ENCODE measurements at regions of chr14 and their contacts with region 1.

Region 1: GRCh38 chr14:91228112-91229004 is 16.1 kb downstream of the GPR68 start:
- DNase-seq: peak; percentile 87
- H3K4me3 Mint-ChIP-seq: peak overlapping the region; percentile 80
- H3K27ac Mint-ChIP-seq: peak overlapping the region; percentile 100
- H3K4me1 Mint-ChIP-seq: peaks cover 89% of the 10 kb centered on the region
- H3K27me3 Mint-ChIP-seq: no peaks in the 10 kb centered on the region

Region 2: GRCh38 chr14:90970167-90970600 is 258.2 kb before region 1 on chr14:
- intact Hi-C with region 1: loop called (anchors 5 kb)
- DNase-seq: no peak
- H3K4me3 Mint-ChIP-seq: peak overlapping the region; percentile 71
- H3K27ac Mint-ChIP-seq: peak overlapping the region; percentile 90
- H3K4me1 Mint-ChIP-seq: peaks cover 50% of the 10 kb centered on the region
- H3K27me3 Mint-ChIP-seq: no peaks in the 10 kb centered on the region

Region 3: GRCh38 chr14:91078095-91078737 is 150.1 kb before region 1 on chr14:
- intact Hi-C with region 1: loop called (anchors 1 kb)
- DNase-seq: peak; percentile 68
- H3K4me3 Mint-ChIP-seq: peak overlapping the region; percentile 51
- H3K27ac Mint-ChIP-seq: peak overlapping the region; percentile 85
- H3K4me1 Mint-ChIP-seq: peaks cover 63% of the 10 kb centered on the region
- H3K27me3 Mint-ChIP-seq: peaks cover 6% of the 10 kb centered on the region

Region 4: DNA sequence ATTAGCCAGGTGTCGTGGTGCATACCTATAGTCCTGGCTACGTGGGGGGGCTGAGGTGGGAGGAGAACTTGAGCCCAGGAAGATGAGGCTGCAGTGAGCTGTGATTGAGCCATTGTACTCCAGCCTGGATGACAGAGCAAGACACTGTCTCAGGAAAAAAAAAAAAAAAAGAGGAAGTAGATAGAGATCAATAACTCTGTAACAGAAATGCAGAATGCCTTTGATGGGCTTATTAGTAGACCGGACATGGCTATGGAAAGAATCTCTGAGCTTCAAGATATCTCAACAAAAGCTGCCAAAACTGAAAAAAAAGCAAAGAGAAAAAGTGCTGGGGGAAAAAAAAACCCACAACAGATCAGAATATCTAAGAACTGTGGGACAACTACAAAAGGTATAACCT is 21.4 kb before region 1 on chr14:
- intact Hi-C with region 1: loop called (anchors 2 kb)
- DNase-seq: no peak
- H3K4me3 Mint-ChIP-seq: no peak overlapping the region
- H3K27ac Mint-ChIP-seq: no peak overlapping the region
- H3K4me1 Mint-ChIP-seq: peaks cover 41% of the 10 kb centered on the region
- H3K27me3 Mint-ChIP-seq: no peaks in the 10 kb centered on the region

Region 5: DNA sequence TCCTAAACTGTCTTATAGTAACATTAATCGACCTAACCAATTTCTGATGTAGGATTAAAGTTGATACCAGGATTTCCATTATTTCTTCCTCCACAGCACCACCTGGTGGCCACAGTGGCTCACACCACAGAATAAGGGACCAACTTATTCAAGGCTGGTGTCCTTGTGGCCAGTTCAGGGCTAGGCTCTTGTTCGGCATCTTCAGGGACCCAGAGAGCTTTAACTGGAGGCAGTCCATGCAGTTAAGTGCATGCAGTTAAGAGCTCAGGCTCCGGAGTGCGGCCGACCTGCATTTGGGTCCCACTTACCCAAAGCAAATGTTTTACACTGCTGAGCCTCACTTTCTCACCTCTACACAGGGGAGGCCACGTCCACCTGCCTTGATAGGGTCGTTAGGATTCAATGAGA is 58.2 kb after region 1 on chr14:
- intact Hi-C with region 1: loop called (anchors 1 kb)
- DNase-seq: peak; percentile 66
- H3K4me3 Mint-ChIP-seq: no peak overlapping the region
- H3K27ac Mint-ChIP-seq: peak overlapping the region; percentile 32
- H3K4me1 Mint-ChIP-seq: peaks cover 25% of the 10 kb centered on the region
- H3K27me3 Mint-ChIP-seq: no peaks in the 10 kb centered on the region

Region 6: GRCh38 chr14:91418387-91419043 is 190.2 kb after region 1 on chr14:
- intact Hi-C with region 1: loop called (anchors 2 kb)
- DNase-seq: peak; percentile 71
- H3K4me3 Mint-ChIP-seq: peak overlapping the region; percentile 77
- H3K27ac Mint-ChIP-seq: peak overlapping the region; percentile 77
- H3K4me1 Mint-ChIP-seq: peaks cover 42% of the 10 kb centered on the region
- H3K27me3 Mint-ChIP-seq: peaks cover 3% of the 10 kb centered on the region